ENCODE measurements at regions of chr3 and their contacts with region 1.

Region 1: GRCh38 chr3:197224034-197224444 is 74.4 kb downstream of the DLG1 start:
- DNase-seq: no peak
- H3K4me3 ChIP-seq: no peak overlapping the region
- H3K27me3 ChIP-seq: no peaks in the 10 kb centered on the region
- CTCF ChIP-seq: peak; percentile 61

Region 2: DNA sequence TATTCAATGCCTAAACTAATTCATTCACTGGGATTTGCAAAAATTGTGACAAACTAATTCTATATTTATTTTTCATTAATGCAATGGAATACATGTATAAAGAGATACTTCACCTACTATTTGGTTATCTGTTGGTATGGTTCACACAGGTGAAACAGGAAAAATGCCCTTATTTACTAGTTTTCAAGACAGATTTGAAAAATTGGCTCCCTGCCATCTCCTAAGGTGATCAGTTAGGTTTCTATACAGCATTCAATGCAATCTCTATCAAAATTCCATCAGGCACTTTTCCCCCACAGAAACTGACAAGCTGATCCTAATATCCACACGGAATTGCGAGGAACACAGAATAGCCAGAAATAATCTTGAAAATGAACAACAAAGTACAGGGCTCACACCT is 26.7 kb before region 1 on chr3:
- CTCF ChIA-PET with region 1: no interaction called
- POLR2A ChIA-PET with region 1: no interaction called
- DNase-seq: no peak
- H3K4me3 ChIP-seq: no peak overlapping the region
- H3K27me3 ChIP-seq: no peaks in the 10 kb centered on the region
- CTCF ChIP-seq: no peak

Region 3: DNA sequence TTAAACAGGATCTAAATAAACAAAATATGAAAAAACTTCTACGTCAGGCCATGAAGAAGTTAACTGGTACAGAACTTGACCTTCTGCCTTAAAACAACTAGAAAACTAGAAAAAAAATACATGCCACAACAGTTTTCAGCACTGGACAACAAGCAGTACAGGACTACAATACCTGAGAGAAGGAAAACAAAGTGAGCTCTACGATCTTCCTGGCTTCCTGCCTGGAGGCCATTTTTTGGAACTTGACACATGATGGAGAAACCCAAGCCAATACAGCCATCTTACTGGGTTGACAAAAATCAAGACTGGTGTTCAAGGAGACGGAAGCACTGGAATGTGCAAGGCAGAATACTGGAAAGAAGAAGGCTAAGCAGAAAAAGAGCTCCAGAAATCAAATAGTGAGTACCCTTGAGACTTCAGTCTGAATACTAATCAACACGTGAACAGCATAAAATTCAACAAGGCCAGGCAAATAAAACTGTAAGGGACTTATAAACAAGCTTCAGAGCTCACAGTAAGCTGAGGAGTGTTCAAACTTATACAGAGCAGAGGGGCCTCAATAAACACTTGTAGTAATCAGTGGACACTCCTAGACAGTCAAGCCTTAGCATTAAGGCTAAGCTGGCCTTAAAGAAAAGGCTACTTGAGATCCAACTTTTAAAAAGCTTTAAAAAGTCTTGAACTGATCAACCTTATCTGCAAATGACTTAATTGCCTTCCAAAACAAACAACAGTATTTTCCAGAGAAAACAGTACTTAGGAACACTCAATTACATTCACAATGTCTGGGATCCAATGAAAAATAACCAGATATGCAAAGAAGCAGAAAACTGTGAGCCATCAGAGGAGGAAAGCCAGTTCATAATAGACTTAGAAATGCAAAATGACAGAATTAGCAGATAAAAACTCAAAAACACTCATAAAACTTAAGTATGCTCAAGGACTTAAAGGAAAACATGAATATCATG is 11.2 kb after region 1 on chr3:
- CTCF ChIA-PET with region 1: interaction called, 14 read pairs
- POLR2A ChIA-PET with region 1: no interaction called
- DNase-seq: no peak
- H3K4me3 ChIP-seq: no peak overlapping the region
- H3K27me3 ChIP-seq: no peaks in the 10 kb centered on the region
- CTCF ChIP-seq: no peak

Region 4: DNA sequence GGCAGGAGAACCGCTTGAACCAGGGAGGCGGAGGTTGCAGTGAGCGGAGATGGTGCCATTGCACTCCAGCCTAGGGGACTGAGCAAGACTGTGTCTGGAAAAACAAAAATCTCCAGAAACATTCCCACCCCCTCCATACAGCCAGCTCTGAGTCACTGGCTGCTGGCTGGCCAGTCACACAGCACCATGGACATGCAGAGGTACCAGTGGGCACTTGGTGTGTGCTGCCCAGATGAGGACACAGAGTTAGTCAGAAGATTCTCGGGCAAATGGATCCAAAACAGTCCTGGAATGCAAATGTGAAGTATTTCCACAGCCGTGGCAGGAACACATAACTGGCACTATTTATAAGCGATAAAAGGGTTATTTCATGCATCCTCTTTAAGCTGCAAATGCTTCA is 287.1 kb after region 1 on chr3:
- CTCF ChIA-PET with region 1: interaction called, 18 read pairs
- POLR2A ChIA-PET with region 1: no interaction called
- DNase-seq: no peak
- H3K4me3 ChIP-seq: no peak overlapping the region
- H3K27me3 ChIP-seq: no peaks in the 10 kb centered on the region; the same call in 1 of the 2 replicates
- CTCF ChIP-seq: no peak

Region 5: GRCh38 chr3:197775317-197775716 is 551.3 kb after region 1 on chr3:
- CTCF ChIA-PET with region 1: no interaction called
- POLR2A ChIA-PET with region 1: no interaction called
- DNase-seq: no peak
- H3K4me3 ChIP-seq: no peak overlapping the region
- H3K27me3 ChIP-seq: no peaks in the 10 kb centered on the region
- CTCF ChIP-seq: no peak